Right ventricle myocardium inferior (tissue), 1 donor: ENCODE measurements at regions of chr11 and their contacts with region 1.

Region 1: DNA sequence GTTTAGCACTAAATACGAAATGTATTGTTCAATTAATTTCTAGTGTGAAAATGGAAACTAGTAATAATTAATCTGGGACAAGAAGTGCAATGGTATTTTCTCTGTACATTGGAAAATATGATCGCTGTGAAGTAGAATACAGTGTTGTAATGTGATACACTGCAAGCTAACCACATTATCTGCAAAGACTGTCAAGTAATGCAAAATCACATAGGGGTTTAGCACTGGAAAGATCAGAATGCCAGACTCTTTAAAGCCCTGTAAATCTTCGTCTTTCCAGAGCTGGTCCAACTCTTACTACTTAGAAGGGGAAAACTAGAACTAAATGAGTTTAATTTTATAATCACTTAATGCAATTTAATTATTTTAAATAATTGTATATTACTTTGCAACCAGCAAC is 544.5 kb upstream of the ANO3 start:
- DNase-seq: no peak
- ATAC-seq: no peak

Region 2: GRCh38 chr11:24509114-24509513 is 1278.3 kb before region 1 on chr11:
- intact Hi-C with region 1: loop called (anchors 5 kb)
- DNase-seq: no peak
- ATAC-seq: no peak

Region 3: GRCh38 chr11:25860677-25861450 is 73.4 kb after region 1 on chr11:
- intact Hi-C with region 1: no loop called
- DNase-seq: no peak
- ATAC-seq: no peak